ENCODE measurements at regions of chr1 and their contacts with region 1.

Region 1: DNA sequence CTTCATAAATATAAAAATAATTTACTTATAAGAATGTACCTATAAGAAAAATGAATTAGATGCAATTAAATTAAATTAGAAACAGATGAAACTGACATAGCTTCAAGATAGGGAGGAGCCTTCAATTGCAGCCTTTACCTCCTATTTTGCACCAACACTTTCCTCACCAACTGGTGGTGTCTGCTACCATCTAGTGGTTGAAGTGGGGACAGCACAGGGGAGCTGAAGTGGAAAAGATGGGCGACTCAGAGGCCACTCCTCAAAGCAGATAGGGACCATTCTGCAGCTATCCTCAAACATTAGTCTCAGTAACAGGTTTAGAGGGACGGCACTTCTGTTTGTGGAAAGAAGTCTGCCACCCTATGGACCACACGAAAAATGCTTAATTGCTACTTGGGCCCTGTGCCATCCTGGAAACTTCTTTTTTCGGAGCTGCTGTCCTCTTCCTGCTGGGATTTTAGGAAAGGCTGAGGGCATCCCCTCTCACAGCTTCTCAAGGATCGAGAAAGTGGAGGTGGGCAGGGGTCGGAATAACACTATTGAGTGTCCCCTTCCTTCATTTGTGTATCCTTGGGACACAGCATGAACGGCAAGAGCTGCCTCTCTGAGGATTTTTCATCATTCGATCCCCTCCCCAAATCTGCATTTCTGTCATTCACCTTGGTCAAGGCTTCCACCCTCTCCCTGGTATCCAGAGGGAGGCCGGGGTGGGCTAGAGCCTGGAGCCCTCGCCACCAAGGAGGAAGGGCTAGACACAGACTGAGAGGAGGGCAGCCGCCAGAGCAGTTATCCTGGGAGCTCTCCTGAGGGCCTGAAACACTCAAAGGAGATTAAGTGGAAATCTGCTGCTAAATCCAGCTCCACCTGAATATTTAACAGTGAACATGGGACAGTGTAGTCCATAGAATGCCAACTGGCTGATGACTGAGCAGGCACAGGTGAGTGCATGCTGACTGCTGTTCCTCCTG is 9.6 kb downstream of the PROK1 start:
- DNase-seq: peak; percentile 88
- H3K4me3 Mint-ChIP-seq: no peak overlapping the region
- H3K27ac Mint-ChIP-seq: no peak overlapping the region
- H3K4me1 Mint-ChIP-seq: no peaks in the 10 kb centered on the region
- H3K27me3 Mint-ChIP-seq: no peaks in the 10 kb centered on the region

Region 2: DNA sequence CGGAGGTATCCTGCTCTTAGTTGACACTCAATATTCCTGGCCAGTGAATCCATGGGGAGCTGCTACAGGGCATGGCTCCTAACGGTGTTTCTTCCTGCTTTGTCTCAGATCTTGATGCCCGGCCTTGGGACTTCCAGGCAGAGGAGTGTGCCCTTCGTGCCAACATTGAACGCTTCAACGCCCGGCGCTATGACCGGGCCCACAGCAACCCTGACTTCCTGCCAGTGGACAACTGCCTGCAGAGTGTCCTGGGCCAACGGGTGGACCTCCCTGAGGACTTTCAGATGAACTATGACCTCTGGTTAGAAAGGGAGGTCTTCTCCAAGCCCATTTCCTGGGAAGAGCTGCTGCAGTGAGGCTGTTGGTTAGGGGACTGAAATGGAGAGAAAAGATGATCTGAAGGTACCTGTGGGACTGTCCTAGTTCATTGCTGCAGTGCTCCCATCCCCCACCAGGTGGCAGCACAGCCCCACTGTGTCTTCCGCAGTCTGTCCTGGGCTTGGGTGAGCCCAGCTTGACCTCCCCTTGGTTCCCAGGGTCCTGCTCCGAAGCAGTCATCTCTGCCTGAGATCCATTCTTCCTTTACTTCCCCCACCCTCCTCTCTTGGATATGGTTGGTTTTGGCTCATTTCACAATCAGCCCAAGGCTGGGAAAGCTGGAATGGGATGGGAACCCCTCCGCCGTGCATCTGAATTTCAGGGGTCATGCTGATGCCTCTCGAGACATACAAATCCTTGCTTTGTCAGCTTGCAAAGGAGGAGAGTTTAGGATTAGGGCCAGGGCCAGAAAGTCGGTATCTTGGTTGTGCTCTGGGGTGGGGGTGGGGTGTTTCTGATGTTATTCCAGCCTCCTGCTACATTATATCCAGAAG is 406.7 kb before region 1 on chr1:
- CTCF ChIA-PET with region 1: interaction called, 11 read pairs
- POLR2A ChIA-PET with region 1: no interaction called
- intact Hi-C with region 1: no loop called
- DNase-seq: peak; percentile 79
- H3K4me3 Mint-ChIP-seq: no peak overlapping the region
- H3K27ac Mint-ChIP-seq: no peak overlapping the region
- H3K4me1 Mint-ChIP-seq: no peaks in the 10 kb centered on the region
- H3K27me3 Mint-ChIP-seq: no peaks in the 10 kb centered on the region

Region 3: DNA sequence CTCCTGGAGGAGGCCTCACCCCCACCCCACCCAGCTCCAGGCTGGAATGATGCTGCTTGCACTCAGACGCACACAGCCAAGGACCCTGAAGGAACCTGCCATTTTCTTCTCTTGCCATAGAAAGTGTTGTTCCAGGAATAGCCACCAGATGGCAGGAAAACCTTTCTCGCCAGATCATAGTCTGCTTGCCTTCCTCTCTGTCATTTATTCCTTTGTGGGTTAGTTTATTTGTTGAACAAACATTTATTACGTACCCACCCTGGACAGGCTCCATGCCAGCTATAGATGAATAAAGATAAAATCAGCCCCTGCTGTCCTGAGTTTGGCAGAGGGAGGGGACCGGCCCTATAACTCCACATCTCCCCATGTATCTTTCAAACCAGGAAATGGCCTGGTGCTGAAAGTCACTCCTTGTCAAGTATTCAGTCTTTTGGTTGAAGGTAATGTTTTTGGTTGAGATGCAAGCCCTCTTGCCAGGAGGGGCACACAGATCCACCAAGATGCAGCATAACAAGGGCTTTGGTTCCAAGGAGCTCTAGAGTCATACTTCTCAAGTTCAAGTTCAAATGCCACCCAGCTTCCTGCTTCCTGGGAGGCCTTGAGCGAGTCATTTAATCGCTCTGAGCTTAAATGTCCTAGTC is 257.4 kb before region 1 on chr1:
- CTCF ChIA-PET with region 1: interaction called, 117 read pairs
- POLR2A ChIA-PET with region 1: interaction called, 3 read pairs
- intact Hi-C with region 1: loop called (anchors 1 kb)
- DNase-seq: peak; percentile 73
- H3K4me3 Mint-ChIP-seq: no peak overlapping the region
- H3K27ac Mint-ChIP-seq: peak overlapping the region; percentile 83
- H3K4me1 Mint-ChIP-seq: peaks cover 15% of the 10 kb centered on the region
- H3K27me3 Mint-ChIP-seq: no peaks in the 10 kb centered on the region

Region 4: DNA sequence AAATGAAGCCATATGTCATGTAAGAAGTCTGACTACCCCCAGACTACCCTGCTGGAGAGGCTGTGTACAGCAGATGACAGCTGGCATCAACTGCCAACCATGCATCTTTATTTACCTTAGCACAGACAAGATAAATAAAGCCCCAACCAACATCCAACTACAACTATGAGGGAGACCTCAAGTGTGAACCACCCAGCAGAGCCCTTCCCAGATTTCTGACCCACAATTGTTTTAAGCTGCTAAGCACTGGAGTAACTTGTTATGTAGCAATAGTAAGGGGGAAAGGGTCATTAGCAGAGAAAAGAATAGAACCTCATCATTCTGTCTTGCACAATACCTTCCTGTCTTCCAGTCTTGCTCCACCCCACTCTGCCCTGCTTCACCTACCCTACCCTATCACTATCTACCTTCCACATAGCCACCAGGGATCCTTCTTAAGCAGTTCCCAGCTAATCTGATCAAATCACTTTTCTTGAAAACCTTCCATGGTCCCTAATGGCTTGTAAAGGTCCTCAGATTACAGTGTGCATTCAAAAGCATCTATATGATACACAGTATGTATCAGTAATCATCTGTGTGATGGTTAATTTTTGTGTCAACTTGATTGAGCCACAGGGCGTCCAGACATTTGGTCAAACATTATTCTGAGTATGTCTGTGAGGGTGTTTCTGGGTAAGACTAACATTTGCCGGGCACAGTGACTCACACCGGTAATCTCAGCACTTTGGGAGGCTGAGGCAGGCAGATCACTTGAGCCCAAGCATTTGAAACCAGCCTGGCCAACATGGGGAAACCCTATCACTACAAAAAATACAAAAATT is 141.0 kb before region 1 on chr1:
- CTCF ChIA-PET with region 1: interaction called, 26 read pairs
- POLR2A ChIA-PET with region 1: no interaction called
- intact Hi-C with region 1: loop called (anchors 10 kb)
- DNase-seq: no peak
- H3K4me3 Mint-ChIP-seq: no peak overlapping the region
- H3K27ac Mint-ChIP-seq: no peak overlapping the region
- H3K4me1 Mint-ChIP-seq: no peaks in the 10 kb centered on the region
- H3K27me3 Mint-ChIP-seq: no peaks in the 10 kb centered on the region

Region 5: DNA sequence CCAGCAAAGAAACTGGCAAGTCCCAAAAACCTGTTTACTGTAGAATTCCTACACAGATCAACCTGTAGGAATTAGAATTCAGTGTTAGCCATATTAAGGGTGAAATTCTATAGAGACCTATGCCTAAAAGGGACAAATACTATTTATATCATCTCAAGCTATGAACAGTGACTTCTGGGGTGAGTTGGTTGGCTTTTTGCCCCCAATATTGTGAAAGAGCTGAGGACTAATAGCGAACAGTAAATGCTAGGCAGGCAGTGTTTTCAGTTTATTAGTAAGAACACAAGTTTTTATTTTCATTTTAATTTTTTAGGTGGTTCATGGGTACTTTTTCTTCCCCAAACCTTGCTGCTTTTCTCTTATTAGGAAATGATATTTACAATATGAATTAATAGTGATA is 85.0 kb before region 1 on chr1:
- CTCF ChIA-PET with region 1: no interaction called
- POLR2A ChIA-PET with region 1: no interaction called
- intact Hi-C with region 1: no loop called
- DNase-seq: no peak
- H3K4me3 Mint-ChIP-seq: no peak overlapping the region
- H3K27ac Mint-ChIP-seq: no peak overlapping the region
- H3K4me1 Mint-ChIP-seq: peaks cover 9% of the 10 kb centered on the region
- H3K27me3 Mint-ChIP-seq: no peaks in the 10 kb centered on the region

Region 6: DNA sequence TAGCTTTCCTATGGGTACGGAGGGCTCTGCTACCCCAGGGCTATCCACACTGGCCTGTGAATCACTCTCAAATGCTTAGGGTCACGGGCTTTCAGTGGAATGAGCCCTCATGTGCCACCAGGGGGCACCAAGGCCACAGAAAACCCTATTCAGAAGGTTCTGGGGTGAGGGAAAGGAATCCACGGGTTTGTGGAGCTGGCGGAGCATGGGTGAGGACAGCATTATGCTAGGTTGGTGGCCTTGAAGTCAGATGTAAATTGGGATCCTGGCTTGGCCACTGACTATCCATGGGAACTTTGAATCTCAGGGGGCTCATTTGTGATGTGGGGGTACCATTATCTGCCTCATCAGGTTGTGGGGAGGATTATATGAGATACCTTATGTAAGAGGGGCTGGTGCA is 48.0 kb before region 1 on chr1:
- CTCF ChIA-PET with region 1: interaction called, 152 read pairs
- POLR2A ChIA-PET with region 1: interaction called, 7 read pairs
- intact Hi-C with region 1: loop called (anchors 1 kb)
- DNase-seq: peak; percentile 74
- H3K4me3 Mint-ChIP-seq: no peak overlapping the region
- H3K27ac Mint-ChIP-seq: no peak overlapping the region
- H3K4me1 Mint-ChIP-seq: peaks cover 9% of the 10 kb centered on the region
- H3K27me3 Mint-ChIP-seq: no peaks in the 10 kb centered on the region

Region 7: DNA sequence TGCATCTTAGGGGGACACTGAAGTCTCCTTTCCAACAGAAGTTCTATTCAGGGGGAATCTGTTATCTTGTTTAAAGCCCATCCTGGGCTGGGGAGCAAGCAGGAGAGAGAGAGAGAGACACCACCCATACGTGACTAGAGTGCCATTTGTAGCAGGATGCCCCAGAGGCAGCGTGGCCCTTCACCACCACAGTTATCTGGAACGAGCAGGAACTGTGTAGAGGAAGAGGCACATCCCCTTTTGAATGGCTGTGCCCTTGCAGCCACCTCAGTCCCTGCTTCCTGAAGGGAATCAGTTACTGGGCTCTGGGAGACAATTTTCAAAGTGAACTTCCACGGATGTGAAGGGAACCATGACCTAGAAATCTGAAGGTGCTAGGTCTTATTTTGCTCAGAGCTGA is 33.7 kb before region 1 on chr1:
- CTCF ChIA-PET with region 1: interaction called, 24 read pairs
- POLR2A ChIA-PET with region 1: no interaction called
- intact Hi-C with region 1: no loop called
- DNase-seq: no peak
- H3K4me3 Mint-ChIP-seq: no peak overlapping the region
- H3K27ac Mint-ChIP-seq: no peak overlapping the region
- H3K4me1 Mint-ChIP-seq: no peaks in the 10 kb centered on the region
- H3K27me3 Mint-ChIP-seq: peaks cover 1% of the 10 kb centered on the region

Region 8: GRCh38 chr1:110495926-110496600 is 35.5 kb after region 1 on chr1:
- CTCF ChIA-PET with region 1: interaction called, 49 read pairs
- POLR2A ChIA-PET with region 1: no interaction called
- intact Hi-C with region 1: loop called (anchors 5 kb)
- DNase-seq: peak; percentile 86
- H3K4me3 Mint-ChIP-seq: no peak overlapping the region
- H3K27ac Mint-ChIP-seq: no peak overlapping the region
- H3K4me1 Mint-ChIP-seq: no peaks in the 10 kb centered on the region
- H3K27me3 Mint-ChIP-seq: no peaks in the 10 kb centered on the region

Measured in activated CD4-positive, alpha-beta memory T cell treated with anti-CD3 and anti-CD28 coated beads for 36 hours (primary cell).